AG04450 (cell line): ENCODE measurements at regions of chr1 and their contacts with region 1.

Region 1: DNA sequence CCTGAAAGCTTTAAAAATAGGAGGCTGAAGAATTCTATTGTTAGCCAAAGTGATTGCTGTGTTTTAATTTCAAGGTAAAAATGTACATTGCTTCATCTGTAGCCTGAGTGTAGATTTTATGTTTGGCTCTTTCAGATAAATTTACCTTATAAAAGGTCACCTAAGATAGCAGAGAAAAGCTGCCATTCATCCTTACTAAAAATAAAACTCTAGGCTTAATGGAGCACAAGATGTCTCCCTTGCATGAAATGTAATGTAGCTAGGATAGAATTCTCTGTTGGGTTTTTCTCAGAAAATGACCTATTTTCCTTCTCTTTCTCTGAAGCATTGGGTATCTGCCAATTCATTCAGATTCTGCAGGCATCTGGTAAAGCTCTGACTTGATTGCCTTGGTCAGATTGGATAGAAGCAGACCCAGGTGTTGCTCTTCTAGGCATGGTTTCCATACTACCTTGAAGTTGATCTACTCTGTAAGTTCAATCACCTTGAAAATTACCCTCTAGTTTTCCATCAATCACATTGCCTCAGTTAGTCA is 176.6 kb upstream of the GORAB start:
- DNase-seq: no peak
- H3K4me3 ChIP-seq: no peak overlapping the region
- H3K27ac ChIP-seq: no peak overlapping the region
- H3K27me3 ChIP-seq: no peaks in the 10 kb centered on the region
- CTCF ChIP-seq: peak; percentile 37

Region 2: DNA sequence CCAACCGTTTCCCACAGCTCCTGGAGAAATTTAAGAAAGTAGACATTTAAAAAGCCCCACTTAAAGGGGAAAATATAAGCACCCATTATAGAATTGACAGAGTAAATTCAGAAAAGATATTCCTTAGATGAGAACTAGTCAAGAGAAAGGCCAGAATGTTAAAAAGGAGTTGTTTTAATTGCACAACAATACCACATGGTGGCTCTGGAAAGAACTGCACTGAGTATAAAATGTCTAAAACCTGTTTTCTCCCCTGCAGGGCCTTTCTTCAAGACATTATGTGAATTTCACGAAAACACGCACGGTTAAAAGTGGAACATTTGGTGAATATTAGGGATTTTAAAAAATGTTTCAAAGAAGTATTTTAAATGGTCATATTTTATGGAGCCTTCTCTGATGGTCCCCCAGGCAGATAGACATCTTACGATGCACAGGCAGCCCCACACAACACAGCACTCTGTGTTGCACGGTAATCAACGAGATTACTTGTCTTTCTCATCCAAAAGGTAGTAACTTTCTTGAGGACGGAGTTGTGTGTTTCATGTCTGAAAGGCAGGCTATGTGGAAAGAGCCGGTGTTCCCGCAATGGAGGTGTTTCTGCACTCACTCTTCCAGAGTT is 410.5 kb after region 1 on chr1:
- CTCF ChIA-PET with region 1: interaction called, 10 read pairs
- POLR2A ChIA-PET with region 1: no interaction called
- DNase-seq: peak; percentile 8
- H3K4me3 ChIP-seq: no peak overlapping the region
- H3K27ac ChIP-seq: no peak overlapping the region
- H3K27me3 ChIP-seq: no peaks in the 10 kb centered on the region
- CTCF ChIP-seq: peak; percentile 69